MCF 10A (cell line): ENCODE measurements at regions of chr6 and their contacts with region 1.

Region 1: GRCh38 chr6:113433335-113433991 is 423.7 kb upstream of the MARCKS start:
- DNase-seq: peak; percentile 95
- H3K4me3 Mint-ChIP-seq: peak overlapping the region; percentile 57
- H3K27ac Mint-ChIP-seq: peak overlapping the region; percentile 43
- H3K4me1 Mint-ChIP-seq: peaks cover 21% of the 10 kb centered on the region
- H3K27me3 Mint-ChIP-seq: no peaks in the 10 kb centered on the region
- CTCF ChIP-seq: no peak

Region 2: DNA sequence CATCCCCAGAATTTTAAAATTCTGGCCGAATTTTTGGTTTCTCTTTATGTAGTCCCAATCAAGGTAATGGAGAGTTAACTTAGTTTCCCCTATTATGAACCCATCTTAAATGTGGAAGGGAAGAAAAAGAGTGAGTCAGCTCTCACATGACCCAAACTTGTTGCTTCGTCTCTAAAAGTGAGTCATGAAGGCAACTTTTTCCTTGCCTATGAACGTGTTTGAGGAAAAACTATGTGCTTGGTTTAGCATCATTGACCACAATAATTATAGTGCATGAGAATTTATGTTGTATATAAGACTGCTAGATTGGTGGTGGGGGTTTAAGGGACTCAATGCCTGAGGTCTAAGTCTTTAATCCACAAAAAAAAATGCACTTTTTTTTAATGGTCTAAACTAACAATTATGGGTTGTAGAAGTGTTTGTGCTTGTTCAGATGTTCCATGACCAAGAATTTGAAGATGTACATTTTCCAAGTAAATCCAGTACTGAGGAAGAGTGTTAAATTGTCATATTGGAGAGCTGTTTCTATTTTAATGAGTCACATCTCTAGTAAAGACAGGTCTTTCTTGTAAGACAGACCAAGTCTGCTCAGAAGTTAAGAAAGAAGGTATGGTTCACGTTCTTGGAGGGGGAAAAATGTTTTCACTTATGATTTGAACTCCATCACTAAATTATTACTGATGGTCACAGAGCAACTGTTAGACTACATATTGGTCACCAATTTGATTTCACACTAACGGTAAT is 13.8 kb after region 1 on chr6:
- CTCF ChIA-PET with region 1: interaction called, 7 read pairs
- POLR2A ChIA-PET with region 1: interaction called, 72 read pairs
- intact Hi-C with region 1: no loop called
- DNase-seq: peak; percentile 88
- H3K4me3 Mint-ChIP-seq: no peak overlapping the region
- H3K27ac Mint-ChIP-seq: peak overlapping the region; percentile 88
- H3K4me1 Mint-ChIP-seq: peaks cover 41% of the 10 kb centered on the region
- H3K27me3 Mint-ChIP-seq: no peaks in the 10 kb centered on the region
- CTCF ChIP-seq: no peak

Region 3: GRCh38 chr6:113464959-113465358 is 31.5 kb after region 1 on chr6:
- CTCF ChIA-PET with region 1: no interaction called
- POLR2A ChIA-PET with region 1: interaction called, 10 read pairs
- intact Hi-C with region 1: no loop called
- DNase-seq: peak; percentile 89
- H3K4me3 Mint-ChIP-seq: no peak overlapping the region
- H3K27ac Mint-ChIP-seq: peak overlapping the region; percentile 3
- H3K4me1 Mint-ChIP-seq: peaks cover 13% of the 10 kb centered on the region
- H3K27me3 Mint-ChIP-seq: no peaks in the 10 kb centered on the region
- CTCF ChIP-seq: no peak

Region 4: GRCh38 chr6:113642714-113643406 is 209.4 kb after region 1 on chr6:
- CTCF ChIA-PET with region 1: interaction called, 3 read pairs
- POLR2A ChIA-PET with region 1: interaction called, 10 read pairs
- intact Hi-C with region 1: no loop called
- DNase-seq: peak; percentile 20
- H3K4me3 Mint-ChIP-seq: no peak overlapping the region
- H3K27ac Mint-ChIP-seq: no peak overlapping the region
- H3K4me1 Mint-ChIP-seq: peaks cover 14% of the 10 kb centered on the region
- H3K27me3 Mint-ChIP-seq: no peaks in the 10 kb centered on the region
- CTCF ChIP-seq: no peak